ENCODE measurements at regions of chr2 and their contacts with region 1.

Region 1: DNA sequence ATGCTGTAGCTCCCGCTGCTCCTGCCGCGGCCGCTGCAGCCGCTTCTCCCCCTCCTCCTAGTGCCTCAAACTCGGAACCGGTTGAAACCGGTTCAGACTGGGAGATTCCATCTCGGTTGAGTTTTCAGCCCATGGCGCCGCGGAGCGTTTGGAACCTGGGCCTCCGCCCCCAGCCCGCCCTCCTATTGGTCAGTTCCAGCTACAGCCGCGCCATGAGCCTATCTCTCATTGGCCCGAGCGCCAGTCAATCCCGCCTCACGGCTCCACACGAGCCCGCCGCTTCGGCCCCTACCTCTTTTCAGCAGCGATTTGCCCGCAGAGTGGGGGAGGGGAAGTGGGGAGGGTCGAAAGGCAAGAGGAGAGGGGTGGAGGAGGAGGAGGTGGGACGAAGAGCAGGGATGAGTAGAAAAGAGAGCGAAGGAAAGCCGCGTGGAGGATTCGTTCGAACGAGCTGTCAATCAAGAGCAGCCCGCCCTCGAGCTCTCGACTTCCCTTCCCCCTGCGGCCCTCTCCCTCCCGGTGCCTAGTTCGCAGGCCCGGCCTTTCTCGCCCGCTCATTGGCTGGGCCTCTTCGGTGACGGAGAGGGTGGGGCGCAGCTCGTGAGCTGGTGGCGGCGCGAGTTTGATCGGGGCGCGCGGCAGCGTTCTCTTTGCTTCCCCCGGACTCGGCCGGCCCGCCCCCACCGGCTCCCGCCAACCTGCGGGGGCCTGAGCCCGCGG is at the start of gene XPO1:
- DNase-seq: peak; percentile 96 to 100 (median 98)
- ATAC-seq: peak; percentile 75
- H3K4me3 ChIP-seq: peak within 1 kb of the TSS; percentile 85
- H3K4me3 Mint-ChIP-seq: peak within 1 kb of the TSS; percentile 99
- H3K27ac ChIP-seq: peak within 1 kb of the TSS; percentile 98 to 99
- H3K27ac Mint-ChIP-seq: peak within 1 kb of the TSS; percentile 97
- H3K4me1 ChIP-seq: peaks cover 15% of the 10 kb centered on the region
- H3K4me1 Mint-ChIP-seq: peaks cover 34% of the 10 kb centered on the region
- H3K27me3 ChIP-seq: no peaks in the 10 kb centered on the region
- H3K27me3 Mint-ChIP-seq: no peaks in the 10 kb centered on the region
- CTCF ChIP-seq: no peak
- total RNA-seq, gene XPO1: 111 to 118 TPM

Region 2: DNA sequence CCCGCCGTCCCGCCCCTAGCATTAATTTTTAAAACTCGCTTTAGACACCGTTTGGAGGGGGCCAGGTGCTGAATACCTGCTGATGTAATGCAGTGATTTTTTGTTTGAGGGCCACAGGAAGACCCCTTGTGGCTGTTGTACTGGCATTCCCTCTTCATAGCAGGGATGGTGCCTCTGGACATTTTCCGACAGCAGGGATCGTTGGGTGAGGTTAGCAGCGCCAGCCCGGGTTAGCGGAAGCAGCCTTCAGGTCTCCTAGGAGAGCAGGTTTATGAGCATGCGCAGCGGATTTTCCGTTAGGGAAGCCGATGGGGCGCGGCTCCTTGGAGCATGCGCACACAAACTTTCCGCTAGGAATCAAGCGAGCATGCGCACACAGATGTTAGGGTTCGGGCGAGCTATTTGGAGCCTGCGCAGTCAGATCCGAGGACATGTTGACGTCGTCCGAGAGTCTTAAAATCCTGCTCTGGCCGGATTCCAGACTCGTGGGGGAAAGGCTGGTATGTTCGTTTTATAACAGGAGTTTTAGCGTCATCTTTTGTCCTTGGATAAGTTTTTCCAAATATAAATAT is 393.6 kb before region 1 on chr2:
- CTCF ChIA-PET with region 1: no interaction called
- POLR2A ChIA-PET with region 1: interaction called, 13 read pairs
- intact Hi-C with region 1: no loop called
- DNase-seq: peak; percentile 80 to 97 (median 88)
- ATAC-seq: peak; percentile 89
- H3K4me3 ChIP-seq: peak overlapping the region; percentile 70
- H3K4me3 Mint-ChIP-seq: peak overlapping the region; percentile 89
- H3K27ac ChIP-seq: peak overlapping the region; percentile 21 to 69
- H3K27ac Mint-ChIP-seq: peak overlapping the region; percentile 86
- H3K4me1 ChIP-seq: peaks cover 12% of the 10 kb centered on the region
- H3K4me1 Mint-ChIP-seq: peaks cover 7% of the 10 kb centered on the region
- H3K27me3 ChIP-seq: no peaks in the 10 kb centered on the region
- H3K27me3 Mint-ChIP-seq: no peaks in the 10 kb centered on the region
- CTCF ChIP-seq: no peak

Region 3: GRCh38 chr2:61220768-61221167 is 317.6 kb before region 1 on chr2:
- CTCF ChIA-PET with region 1: no interaction called
- POLR2A ChIA-PET with region 1: no interaction called
- intact Hi-C with region 1: no loop called
- DNase-seq: no peak
- ATAC-seq: no peak
- H3K4me3 ChIP-seq: no peak overlapping the region
- H3K4me3 Mint-ChIP-seq: no peak overlapping the region
- H3K27ac ChIP-seq: no peak overlapping the region
- H3K27ac Mint-ChIP-seq: no peak overlapping the region
- H3K4me1 ChIP-seq: no peaks in the 10 kb centered on the region
- H3K4me1 Mint-ChIP-seq: no peaks in the 10 kb centered on the region
- H3K27me3 ChIP-seq: no peaks in the 10 kb centered on the region
- H3K27me3 Mint-ChIP-seq: no peaks in the 10 kb centered on the region
- CTCF ChIP-seq: no peak

Region 4: GRCh38 chr2:61426267-61426897 is 112.0 kb before region 1 on chr2:
- CTCF ChIA-PET with region 1: interaction called, 13 read pairs
- POLR2A ChIA-PET with region 1: interaction called, 39 read pairs
- intact Hi-C with region 1: loop called (anchors 5 to 10 kb)
- DNase-seq: peak; percentile 57 to 86 (median 69)
- ATAC-seq: peak; percentile 91
- H3K4me3 ChIP-seq: no peak overlapping the region
- H3K4me3 Mint-ChIP-seq: peak overlapping the region; percentile 44
- H3K27ac ChIP-seq: peak overlapping the region in 1 of 2 donors; percentile 72
- H3K27ac Mint-ChIP-seq: peak overlapping the region; percentile 96
- H3K4me1 ChIP-seq: peaks cover 38% of the 10 kb centered on the region
- H3K4me1 Mint-ChIP-seq: peaks cover 73% of the 10 kb centered on the region
- H3K27me3 ChIP-seq: no peaks in the 10 kb centered on the region
- H3K27me3 Mint-ChIP-seq: no peaks in the 10 kb centered on the region
- CTCF ChIP-seq: peak; percentile 81

Region 5: DNA sequence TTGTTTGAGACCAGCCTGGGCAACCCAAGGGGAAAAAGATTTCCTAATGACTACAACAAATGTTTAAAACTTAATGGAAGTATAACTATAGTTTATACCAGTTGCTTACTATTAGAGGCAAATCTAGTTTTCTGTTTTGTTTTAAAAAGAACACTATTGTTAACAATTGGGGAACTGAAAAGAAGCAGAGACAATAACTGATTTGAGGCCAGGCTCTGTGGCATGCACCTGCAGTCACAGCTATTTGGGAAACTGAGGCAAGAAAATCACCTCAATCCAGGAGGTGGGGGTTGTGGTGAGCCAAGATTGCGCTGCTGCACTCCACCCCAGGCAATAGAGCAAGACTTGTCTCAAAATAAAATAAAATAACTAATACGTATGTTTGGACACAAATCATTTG is 39.3 kb before region 1 on chr2:
- CTCF ChIA-PET with region 1: no interaction called
- POLR2A ChIA-PET with region 1: interaction called, 16 read pairs
- intact Hi-C with region 1: loop called (anchors 5 kb)
- DNase-seq: no peak
- ATAC-seq: no peak
- H3K4me3 ChIP-seq: no peak overlapping the region
- H3K4me3 Mint-ChIP-seq: no peak overlapping the region
- H3K27ac ChIP-seq: no peak overlapping the region
- H3K27ac Mint-ChIP-seq: no peak overlapping the region
- H3K4me1 ChIP-seq: peaks cover 3% of the 10 kb centered on the region
- H3K4me1 Mint-ChIP-seq: peaks cover 18% of the 10 kb centered on the region
- H3K27me3 ChIP-seq: no peaks in the 10 kb centered on the region
- H3K27me3 Mint-ChIP-seq: no peaks in the 10 kb centered on the region
- CTCF ChIP-seq: no peak

Region 6: GRCh38 chr2:61640406-61640805 is 102.0 kb after region 1 on chr2:
- CTCF ChIA-PET with region 1: no interaction called
- POLR2A ChIA-PET with region 1: no interaction called
- intact Hi-C with region 1: no loop called
- DNase-seq: no peak
- ATAC-seq: no peak
- H3K4me3 ChIP-seq: no peak overlapping the region
- H3K4me3 Mint-ChIP-seq: no peak overlapping the region
- H3K27ac ChIP-seq: no peak overlapping the region
- H3K27ac Mint-ChIP-seq: no peak overlapping the region
- H3K4me1 ChIP-seq: no peaks in the 10 kb centered on the region
- H3K4me1 Mint-ChIP-seq: no peaks in the 10 kb centered on the region
- H3K27me3 ChIP-seq: no peaks in the 10 kb centered on the region
- H3K27me3 Mint-ChIP-seq: no peaks in the 10 kb centered on the region
- CTCF ChIP-seq: no peak

Region 7: DNA sequence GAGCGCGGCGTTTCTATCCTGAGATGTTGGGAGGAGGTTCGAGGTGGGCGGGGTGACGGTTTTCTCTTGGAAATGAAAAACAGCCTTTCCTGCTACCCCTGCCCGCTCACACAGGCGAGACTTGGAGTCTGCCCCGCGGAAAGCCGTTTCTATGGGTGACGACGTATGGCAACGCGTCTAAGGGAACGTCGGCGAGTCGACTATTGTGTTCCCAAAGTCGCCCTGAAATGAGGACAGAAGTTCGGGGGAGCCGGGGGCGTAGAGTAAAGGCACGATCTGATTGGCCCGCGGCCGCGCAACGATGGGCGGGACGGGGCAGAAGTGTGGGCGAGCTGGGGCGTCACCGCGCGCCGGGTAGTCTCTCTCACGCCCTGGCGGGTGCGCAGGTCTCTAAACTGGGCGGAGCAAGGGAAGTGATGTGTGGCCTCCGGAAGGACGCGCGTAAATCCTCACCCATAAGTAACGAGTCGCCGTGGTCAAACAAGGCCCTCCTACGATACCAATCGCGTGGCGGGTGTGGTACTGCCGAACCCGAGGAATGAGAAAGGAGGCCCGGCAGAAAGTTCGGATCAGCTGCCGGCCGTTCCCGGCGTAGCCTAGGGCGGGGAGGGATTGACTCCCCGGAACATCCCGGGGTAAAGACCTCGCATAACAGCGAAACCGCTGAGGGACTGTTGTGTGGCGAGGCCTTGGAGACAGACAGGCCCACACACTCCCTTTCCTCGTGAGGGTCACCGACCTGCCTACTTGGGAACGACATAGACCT is 225.9 kb after region 1 on chr2:
- CTCF ChIA-PET with region 1: no interaction called
- POLR2A ChIA-PET with region 1: interaction called, 33 read pairs
- intact Hi-C with region 1: loop called (anchors 1 to 5 kb)
- DNase-seq: peak; percentile 85 to 99 (median 93)
- ATAC-seq: peak; percentile 96
- H3K4me3 ChIP-seq: peak overlapping the region; percentile 89
- H3K4me3 Mint-ChIP-seq: peak overlapping the region; percentile 96
- H3K27ac ChIP-seq: peak overlapping the region; percentile 92 to 98
- H3K27ac Mint-ChIP-seq: peak overlapping the region; percentile 96
- H3K4me1 ChIP-seq: peaks cover 13% of the 10 kb centered on the region
- H3K4me1 Mint-ChIP-seq: peaks cover 22% of the 10 kb centered on the region
- H3K27me3 ChIP-seq: no peaks in the 10 kb centered on the region
- H3K27me3 Mint-ChIP-seq: no peaks in the 10 kb centered on the region
- CTCF ChIP-seq: no peak

Measured in CD4-positive, alpha-beta T cell (primary cell).